ENCODE measurements at regions of chr11 and their contacts with region 1.

Region 1: DNA sequence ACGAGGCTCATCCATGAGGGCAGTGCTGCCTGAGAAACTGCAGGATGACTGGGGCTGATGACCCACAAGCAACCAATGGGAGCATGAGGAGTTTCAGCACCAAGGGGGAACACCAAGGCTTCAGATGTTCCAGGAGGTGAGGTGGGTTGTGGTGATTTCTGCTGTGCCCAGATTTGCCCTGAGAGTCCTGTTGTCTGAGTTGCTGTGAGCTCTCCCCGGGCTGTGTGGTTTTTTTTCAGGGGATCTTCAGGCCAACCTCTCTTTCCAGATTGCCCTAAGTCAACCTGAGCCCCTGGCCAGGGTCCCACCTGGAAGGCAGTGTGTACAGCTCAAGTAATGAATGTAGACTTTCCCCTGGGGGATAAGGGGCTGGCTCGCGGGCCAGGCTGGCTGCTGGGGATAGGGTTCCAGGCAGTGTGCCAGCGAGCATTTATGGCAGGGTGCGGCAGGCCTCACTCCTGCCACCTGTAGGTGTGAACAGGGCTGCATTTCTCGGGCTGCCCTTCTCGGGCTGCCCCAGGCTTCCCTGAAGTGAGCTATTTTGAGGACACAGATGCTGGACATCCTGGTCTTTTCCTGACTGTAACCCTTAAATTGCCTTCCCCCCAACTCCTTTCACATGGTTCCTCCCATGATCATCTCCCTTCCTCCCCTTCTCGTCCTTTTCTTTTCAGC is 9.8 kb downstream of the SLC22A6 start:
- DNase-seq: peak; percentile 71
- ATAC-seq: peak; percentile 98
- H3K4me3 Mint-ChIP-seq: no peak overlapping the region
- H3K27ac Mint-ChIP-seq: no peak overlapping the region
- H3K4me1 Mint-ChIP-seq: peaks cover 3% of the 10 kb centered on the region; the same call in 1 of the 2 replicates
- H3K27me3 Mint-ChIP-seq: peaks cover 17% of the 10 kb centered on the region
- CTCF ChIP-seq: no peak

Region 2: GRCh38 chr11:62771144-62772021 is 203.6 kb before region 1 on chr11 and contains the start of gene TAF6L:
- CTCF ChIA-PET with region 1: no interaction called
- POLR2A ChIA-PET with region 1: no interaction called
- DNase-seq: peak; percentile 96
- ATAC-seq: peak; percentile 82
- H3K4me3 Mint-ChIP-seq: peak within 1 kb of the TSS; percentile 88
- H3K27ac Mint-ChIP-seq: peak within 1 kb of the TSS; percentile 98
- H3K4me1 Mint-ChIP-seq: peaks cover 14% of the 10 kb centered on the region
- H3K27me3 Mint-ChIP-seq: no peaks in the 10 kb centered on the region; the same call in 1 of the 2 replicates
- CTCF ChIP-seq: no peak
- total RNA-seq, gene TAF6L: 33.8 to 42.1 TPM (median 36.3 TPM) in 3 replicates

Region 3: DNA sequence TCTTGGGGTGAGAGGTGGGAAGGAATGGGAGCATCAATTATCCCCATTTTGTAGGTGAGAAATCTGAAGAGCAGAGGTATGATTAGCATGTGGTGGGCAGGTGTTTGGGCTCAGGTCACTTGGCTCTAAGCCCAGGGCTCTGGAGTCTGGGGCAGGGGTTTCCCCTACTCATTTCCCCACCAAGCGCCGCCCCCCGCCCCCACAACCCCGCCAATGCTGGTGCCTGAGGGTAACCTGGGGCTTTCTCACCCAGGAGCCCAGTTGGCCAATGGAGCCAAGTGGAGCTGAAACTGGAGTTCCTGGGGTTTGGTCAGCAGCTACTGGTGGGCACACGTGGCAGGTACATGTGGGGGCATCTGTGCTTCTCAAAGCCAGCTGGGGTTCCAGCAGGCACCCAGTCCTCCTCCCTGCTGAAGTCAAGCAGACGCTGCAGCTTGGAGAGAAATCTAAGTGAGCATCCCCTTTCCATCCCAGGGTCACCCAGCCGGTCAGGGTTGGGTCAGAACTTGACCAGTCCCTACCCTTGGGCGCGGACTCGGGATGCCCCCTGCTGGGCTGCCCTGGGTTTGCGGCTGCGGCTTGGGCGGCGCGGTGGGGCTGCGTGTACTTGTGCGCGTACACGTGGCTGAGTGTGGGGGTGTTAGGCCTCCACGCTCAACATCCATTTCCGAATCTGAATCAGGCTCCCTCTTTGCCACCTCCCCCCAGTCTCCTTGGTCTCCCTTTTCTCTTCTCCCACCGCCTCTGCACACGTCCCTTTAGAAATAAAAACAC is 52.1 kb before region 1 on chr11:
- CTCF ChIA-PET with region 1: interaction called, 61 read pairs
- POLR2A ChIA-PET with region 1: no interaction called
- DNase-seq: peak; percentile 75
- ATAC-seq: peak; percentile 7
- H3K4me3 Mint-ChIP-seq: peak overlapping the region; percentile 65
- H3K27ac Mint-ChIP-seq: no peak overlapping the region
- H3K4me1 Mint-ChIP-seq: peaks cover 38% of the 10 kb centered on the region
- H3K27me3 Mint-ChIP-seq: peaks cover 60% of the 10 kb centered on the region
- CTCF ChIP-seq: peak; percentile 54

Region 4: DNA sequence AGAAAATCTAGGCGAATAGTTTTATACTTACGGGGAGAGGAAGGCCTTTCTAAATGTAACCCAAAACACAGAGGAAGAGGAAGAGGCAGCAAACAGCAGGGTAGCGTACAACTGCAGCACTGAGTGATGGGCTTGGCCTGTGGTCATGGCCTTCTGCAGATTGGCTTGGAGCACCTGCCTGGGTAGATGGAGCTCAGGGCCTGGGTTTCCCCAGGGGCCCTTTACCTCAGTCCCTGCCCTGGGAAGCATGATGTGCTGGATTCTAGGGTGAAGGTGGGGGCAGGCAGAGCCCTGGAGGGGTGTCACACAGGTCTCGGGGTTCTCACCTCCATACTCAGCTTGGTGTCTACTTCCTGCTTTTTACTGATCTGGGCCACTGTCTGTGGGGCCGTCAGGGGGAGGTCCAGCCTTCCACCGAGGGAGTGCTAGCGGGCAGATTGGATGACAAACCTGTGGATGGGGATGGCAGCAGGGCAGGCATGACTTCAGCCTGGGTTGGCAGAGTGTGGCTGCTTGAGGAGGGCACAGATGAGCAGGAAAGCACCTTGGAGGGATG is 26.1 kb before region 1 on chr11:
- CTCF ChIA-PET with region 1: interaction called, 13 read pairs
- POLR2A ChIA-PET with region 1: no interaction called
- DNase-seq: no peak
- ATAC-seq: no peak
- H3K4me3 Mint-ChIP-seq: no peak overlapping the region
- H3K27ac Mint-ChIP-seq: no peak overlapping the region
- H3K4me1 Mint-ChIP-seq: no peaks in the 10 kb centered on the region
- H3K27me3 Mint-ChIP-seq: peaks cover 2% of the 10 kb centered on the region; the same call in 1 of the 2 replicates
- CTCF ChIP-seq: no peak

Region 5: GRCh38 chr11:62988276-62988675 is 13.3 kb after region 1 on chr11:
- CTCF ChIA-PET with region 1: interaction called, 25 read pairs
- POLR2A ChIA-PET with region 1: no interaction called
- DNase-seq: no peak
- ATAC-seq: no peak
- H3K4me3 Mint-ChIP-seq: no peak overlapping the region
- H3K27ac Mint-ChIP-seq: no peak overlapping the region
- H3K4me1 Mint-ChIP-seq: no peaks in the 10 kb centered on the region
- H3K27me3 Mint-ChIP-seq: peaks cover 4% of the 10 kb centered on the region
- CTCF ChIP-seq: no peak

Region 6: DNA sequence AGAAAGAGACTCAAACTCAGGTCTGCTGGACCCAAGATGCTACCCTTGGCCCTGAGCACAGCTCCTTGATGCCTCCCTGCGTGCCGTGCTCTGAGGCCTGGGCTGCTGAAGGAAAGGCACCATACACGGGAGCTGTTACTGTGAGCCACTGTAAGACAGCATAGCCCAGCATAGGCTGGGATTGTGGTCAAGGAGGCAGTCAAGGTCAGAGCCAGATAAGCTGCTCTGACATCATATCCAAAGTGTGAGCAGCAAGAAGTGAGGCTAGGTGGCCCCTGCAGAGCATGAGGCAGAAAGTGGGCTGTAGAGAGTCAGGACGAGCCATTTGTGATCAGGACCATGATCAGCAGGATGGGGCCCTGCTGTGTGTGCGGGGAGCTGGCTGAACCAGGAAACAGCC is 32.9 kb after region 1 on chr11:
- CTCF ChIA-PET with region 1: interaction called, 34 read pairs
- POLR2A ChIA-PET with region 1: interaction called, 3 read pairs
- DNase-seq: no peak
- ATAC-seq: no peak; the same call in 1 of the 2 replicates
- H3K4me3 Mint-ChIP-seq: no peak overlapping the region
- H3K27ac Mint-ChIP-seq: no peak overlapping the region
- H3K4me1 Mint-ChIP-seq: peaks cover 9% of the 10 kb centered on the region
- H3K27me3 Mint-ChIP-seq: peaks cover 2% of the 10 kb centered on the region; the same call in 1 of the 2 replicates
- CTCF ChIP-seq: no peak

Region 7: DNA sequence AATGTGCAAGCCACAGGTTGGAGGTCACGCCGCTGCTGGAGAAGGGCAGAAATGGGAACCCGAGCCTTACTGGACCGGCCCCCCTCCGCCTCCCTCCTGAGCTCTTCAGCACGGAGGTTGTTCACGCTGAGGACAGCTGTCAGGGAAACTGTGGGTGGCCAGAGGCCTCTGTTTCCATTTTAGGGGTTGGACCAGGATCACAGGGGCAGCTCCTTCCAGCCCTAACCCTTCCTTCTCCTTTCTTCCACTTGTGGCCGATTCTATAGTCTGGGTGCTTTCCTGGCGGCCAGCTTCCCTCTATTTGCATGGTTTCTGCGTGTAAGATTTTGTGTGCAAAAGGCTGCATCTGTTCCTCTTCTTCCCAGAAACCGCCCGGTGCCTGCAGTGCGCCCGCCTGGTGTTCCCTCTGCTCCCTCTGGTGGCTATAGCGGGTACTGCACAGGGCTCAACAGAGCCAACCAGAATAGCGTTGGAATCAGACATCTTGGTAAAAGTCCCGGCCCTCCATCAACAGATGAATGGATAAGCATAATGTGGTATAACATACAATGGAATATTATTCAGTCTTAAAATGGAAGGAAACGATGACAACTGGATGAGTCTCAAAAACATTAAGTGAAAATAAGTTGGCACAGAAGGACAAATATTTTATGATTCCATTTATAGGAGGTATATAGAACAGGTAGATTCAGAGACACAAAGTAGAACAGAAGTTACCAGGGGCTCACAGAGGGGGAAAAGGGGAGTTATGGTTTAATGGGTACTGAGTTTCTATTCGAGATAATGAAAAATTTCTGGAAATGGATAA is 49.1 kb after region 1 on chr11:
- CTCF ChIA-PET with region 1: interaction called, 155 read pairs
- POLR2A ChIA-PET with region 1: interaction called, 3 read pairs
- DNase-seq: peak; percentile 91
- ATAC-seq: peak; percentile 60
- H3K4me3 Mint-ChIP-seq: no peak overlapping the region
- H3K27ac Mint-ChIP-seq: no peak overlapping the region
- H3K4me1 Mint-ChIP-seq: peaks cover 16% of the 10 kb centered on the region
- H3K27me3 Mint-ChIP-seq: peaks cover 14% of the 10 kb centered on the region
- CTCF ChIP-seq: peak; percentile 100

Region 8: DNA sequence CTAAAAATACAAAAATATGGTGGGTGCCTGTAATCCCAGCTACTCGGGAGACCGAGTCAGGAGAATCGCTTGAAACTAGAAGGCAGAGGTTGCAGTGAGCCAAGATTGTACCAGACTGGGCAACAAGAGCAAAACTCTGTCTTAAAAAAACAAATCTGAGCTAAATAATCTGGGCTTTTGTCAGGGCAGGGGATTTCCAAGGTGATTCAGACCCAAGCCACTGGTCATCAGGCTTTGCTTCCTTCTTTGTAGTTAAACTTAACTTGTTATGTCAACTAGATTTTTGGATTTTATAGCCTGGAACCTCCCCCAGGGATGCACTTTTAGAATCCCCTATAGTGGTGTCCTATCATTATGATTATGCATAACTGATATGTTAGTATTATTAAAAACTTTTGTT is 67.6 kb after region 1 on chr11:
- CTCF ChIA-PET with region 1: no interaction called
- POLR2A ChIA-PET with region 1: no interaction called
- DNase-seq: no peak
- ATAC-seq: no peak
- H3K4me3 Mint-ChIP-seq: no peak overlapping the region
- H3K27ac Mint-ChIP-seq: no peak overlapping the region
- H3K4me1 Mint-ChIP-seq: no peaks in the 10 kb centered on the region
- H3K27me3 Mint-ChIP-seq: peaks cover 37% of the 10 kb centered on the region
- CTCF ChIP-seq: no peak

Measured in WTC11 (cell line).